ENCODE measurements at regions of chr9 and their contacts with region 1.

Region 1: DNA sequence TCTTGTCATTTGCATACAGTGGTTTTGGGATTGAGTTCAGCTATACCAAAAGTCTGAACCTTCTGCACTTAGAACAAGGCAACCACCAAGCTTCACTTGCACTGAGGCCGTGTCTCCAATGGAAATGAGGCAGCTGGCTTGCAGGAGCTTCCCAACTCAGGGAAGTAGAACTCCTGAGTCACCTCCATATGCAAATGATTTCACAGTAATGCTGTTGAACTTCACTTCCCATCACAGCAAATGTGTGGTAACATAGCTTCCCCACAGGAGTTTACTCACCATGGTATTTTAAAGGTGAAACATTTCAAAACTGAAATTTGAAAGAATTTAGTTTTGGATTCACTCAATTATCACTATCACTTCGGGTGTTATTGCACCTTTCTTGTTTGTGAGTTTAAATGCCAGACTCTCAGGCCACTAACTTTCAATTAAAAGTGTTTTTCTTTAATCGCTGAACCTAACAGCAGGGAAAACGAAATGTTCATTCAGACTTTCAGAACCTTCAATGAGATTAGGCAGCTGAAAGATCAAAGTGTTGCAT is 9.0 kb downstream of the CD274 start:
- DNase-seq: peak; percentile 75
- H3K4me3 Mint-ChIP-seq: peak overlapping the region; percentile 81
- H3K27ac Mint-ChIP-seq: peak overlapping the region; percentile 85
- H3K4me1 Mint-ChIP-seq: peaks cover 58% of the 10 kb centered on the region
- H3K27me3 Mint-ChIP-seq: no peaks in the 10 kb centered on the region

Region 2: DNA sequence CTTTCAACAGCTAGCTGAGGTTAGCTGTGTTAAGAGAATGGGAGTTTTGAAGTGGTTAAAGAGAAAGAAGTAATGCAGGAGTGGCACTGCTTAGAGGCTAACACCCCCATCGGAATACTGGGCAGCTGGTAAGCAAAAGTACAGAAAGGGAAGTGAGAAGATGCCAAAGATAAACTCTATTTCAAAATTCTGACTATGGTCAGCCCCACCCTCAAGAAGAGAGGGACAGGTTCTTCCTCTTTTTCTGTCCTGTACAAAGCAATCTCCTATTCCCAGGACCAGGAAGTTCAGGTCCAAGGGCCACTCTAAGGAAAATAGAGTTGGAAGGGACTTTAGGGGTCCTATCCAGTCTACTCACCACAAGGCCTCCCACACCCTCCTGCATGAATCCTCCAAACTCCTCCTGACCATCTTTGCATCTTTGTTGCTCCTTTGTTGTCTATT is 520.2 kb before region 1 on chr9:
- intact Hi-C with region 1: loop called (anchors 2 kb)
- DNase-seq: peak; percentile 83
- H3K4me3 Mint-ChIP-seq: peak overlapping the region; percentile 40
- H3K27ac Mint-ChIP-seq: peak overlapping the region; percentile 92
- H3K4me1 Mint-ChIP-seq: peaks cover 67% of the 10 kb centered on the region
- H3K27me3 Mint-ChIP-seq: no peaks in the 10 kb centered on the region

Region 3: DNA sequence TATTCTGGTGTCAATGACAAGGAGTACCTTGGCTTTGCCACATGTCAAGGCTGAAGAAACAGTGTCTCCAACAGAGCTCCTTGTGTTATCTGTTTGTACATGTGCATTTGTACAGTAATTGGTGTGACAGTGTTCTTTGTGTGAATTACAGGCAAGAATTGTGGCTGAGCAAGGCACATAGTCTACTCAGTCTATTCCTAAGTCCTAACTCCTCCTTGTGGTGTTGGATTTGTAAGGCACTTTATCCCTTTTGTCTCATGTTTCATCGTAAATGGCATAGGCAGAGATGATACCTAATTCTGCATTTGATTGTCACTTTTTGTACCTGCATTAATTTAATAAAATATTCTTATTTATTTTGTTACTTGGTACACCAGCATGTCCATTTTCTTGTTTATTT is 10.8 kb after region 1 on chr9:
- intact Hi-C with region 1: no loop called
- DNase-seq: no peak
- H3K4me3 Mint-ChIP-seq: no peak overlapping the region
- H3K27ac Mint-ChIP-seq: no peak overlapping the region
- H3K4me1 Mint-ChIP-seq: peaks cover 24% of the 10 kb centered on the region
- H3K27me3 Mint-ChIP-seq: no peaks in the 10 kb centered on the region

Region 4: DNA sequence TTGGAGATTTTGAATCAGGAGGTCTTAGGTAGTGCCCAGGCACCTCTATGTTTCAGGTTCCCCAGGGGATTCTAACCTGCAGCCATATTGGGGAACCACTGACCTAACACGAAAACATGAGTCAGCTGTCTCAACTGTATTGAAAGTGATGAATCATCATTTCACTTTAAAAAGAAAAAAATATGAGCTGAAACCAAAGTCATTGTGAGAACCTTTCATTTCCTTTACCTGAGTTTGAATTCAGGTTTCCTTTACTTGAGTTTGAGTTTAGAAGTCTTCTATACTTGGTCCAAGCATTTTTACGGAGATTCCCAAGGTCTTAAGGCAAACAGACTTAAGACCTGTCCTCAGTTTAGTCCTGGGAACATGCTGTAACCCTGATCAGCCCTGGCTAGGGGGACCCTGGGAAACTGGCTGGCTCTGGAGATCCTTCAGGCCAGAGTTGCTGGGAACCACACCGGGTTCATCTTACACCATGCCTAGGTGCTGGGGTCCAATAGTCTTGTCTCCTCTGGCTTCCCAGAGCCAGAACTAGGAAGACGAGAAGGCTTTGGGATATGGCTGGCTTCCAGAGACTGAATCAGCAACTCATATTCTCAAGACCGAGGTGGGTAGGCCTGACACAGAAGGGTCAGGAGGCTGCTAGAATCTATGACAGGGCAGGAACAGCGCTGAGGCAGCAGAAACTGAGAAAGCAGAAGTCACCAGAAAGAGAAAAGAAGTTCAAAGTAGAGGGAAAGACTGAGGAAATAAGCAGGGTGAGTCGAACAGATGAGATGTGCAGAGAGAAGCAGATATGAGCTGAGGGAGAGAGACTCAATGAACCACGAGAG is 34.5 kb after region 1 on chr9:
- intact Hi-C with region 1: loop called (anchors 1 kb)
- DNase-seq: peak; percentile 70
- H3K4me3 Mint-ChIP-seq: peak overlapping the region; percentile 40
- H3K27ac Mint-ChIP-seq: peak overlapping the region; percentile 73
- H3K4me1 Mint-ChIP-seq: peaks cover 15% of the 10 kb centered on the region
- H3K27me3 Mint-ChIP-seq: no peaks in the 10 kb centered on the region

Region 5: DNA sequence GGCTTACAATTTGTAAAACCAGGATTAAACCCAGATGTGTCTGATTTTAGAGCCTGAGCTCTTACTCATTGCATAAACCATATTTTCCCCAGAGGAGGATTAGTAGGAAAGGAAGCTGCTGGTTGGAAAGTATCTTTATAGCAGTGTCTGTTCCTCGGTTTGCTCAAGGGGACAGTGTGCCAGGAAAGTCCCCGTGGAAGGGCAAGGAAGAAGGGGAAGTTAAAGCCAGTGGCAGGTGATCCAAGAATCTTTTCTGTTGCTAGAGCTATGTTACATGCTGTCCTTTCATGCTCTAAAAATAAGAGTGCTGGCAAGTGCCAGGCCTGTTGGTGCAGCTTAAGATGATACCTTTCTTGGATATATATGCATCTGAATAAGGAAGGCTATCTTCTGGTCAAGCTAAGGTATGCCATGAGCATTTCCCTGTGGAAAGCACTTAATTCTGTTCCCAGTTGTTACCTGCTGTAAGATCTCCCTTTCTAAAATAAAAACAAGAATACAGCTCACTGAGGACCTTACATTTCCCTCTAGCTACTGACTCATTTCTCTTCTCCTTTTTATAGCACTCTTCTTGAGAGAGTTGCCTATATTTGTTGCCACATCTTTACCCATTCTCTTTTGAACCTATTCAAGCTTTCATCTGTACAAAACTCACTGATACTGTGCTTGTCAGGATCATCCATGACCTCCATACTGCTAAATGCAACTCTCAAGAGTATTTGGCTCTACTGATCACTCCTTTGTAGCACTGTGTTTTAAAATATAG is 59.0 kb after region 1 on chr9:
- intact Hi-C with region 1: loop called (anchors 2 kb)
- DNase-seq: no peak
- H3K4me3 Mint-ChIP-seq: no peak overlapping the region
- H3K27ac Mint-ChIP-seq: peak overlapping the region; percentile 23
- H3K4me1 Mint-ChIP-seq: peaks cover 28% of the 10 kb centered on the region
- H3K27me3 Mint-ChIP-seq: peaks cover 2% of the 10 kb centered on the region

Region 6: GRCh38 chr9:5786370-5787127 is 327.2 kb after region 1 on chr9:
- intact Hi-C with region 1: loop called (anchors 5 kb)
- DNase-seq: no peak
- H3K4me3 Mint-ChIP-seq: no peak overlapping the region
- H3K27ac Mint-ChIP-seq: peak overlapping the region; percentile 6
- H3K4me1 Mint-ChIP-seq: peaks cover 30% of the 10 kb centered on the region
- H3K27me3 Mint-ChIP-seq: no peaks in the 10 kb centered on the region

Region 7: GRCh38 chr9:5843794-5844504 is 384.6 kb after region 1 on chr9:
- intact Hi-C with region 1: no loop called
- DNase-seq: peak; percentile 63
- H3K4me3 Mint-ChIP-seq: peak overlapping the region; percentile 73
- H3K27ac Mint-ChIP-seq: peak overlapping the region; percentile 91
- H3K4me1 Mint-ChIP-seq: peaks cover 68% of the 10 kb centered on the region
- H3K27me3 Mint-ChIP-seq: no peaks in the 10 kb centered on the region

Measured in activated CD4-positive, alpha-beta T cell treated with anti-CD3 and anti-CD28 coated beads, Interleukin-2, amount 10 ng/mL, durations not matched to agents 24 days and 14 days (primary cell).